ENCODE measurements at regions of chr20 and their contacts with region 1.

Region 1: DNA sequence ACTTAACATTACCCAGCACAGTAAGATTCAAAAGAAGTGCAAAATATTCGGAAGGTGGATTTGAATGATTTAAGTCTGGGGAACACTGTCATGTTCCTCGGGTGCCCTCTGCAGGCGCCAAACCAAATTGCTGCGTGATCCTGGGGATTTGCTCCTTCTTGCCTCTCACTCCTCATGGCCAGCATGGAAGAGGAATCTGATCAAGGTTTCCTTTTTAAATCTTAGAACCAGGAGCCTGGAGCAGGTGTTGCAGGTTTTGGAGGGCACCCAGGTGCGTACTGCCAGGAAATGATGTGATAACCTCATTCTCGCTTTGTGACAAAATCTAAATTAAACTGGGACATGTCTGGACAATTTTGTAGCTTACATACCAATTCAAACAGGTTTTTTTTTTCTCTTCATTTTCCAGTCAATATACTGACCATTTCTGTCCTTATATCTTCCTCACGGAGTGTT is 8.1 kb upstream of the PFDN4 start:
- DNase-seq: peak; percentile 59 to 81
- ATAC-seq: peak; percentile 52 to 82 (median 71)
- H3K4me3 ChIP-seq: no peak overlapping the region
- H3K4me3 Mint-ChIP-seq: no peak overlapping the region
- H3K27ac ChIP-seq: no peak overlapping the region
- H3K27ac Mint-ChIP-seq: no peak overlapping the region
- H3K4me1 ChIP-seq: no peaks in the 10 kb centered on the region
- H3K4me1 Mint-ChIP-seq: no peaks in the 10 kb centered on the region
- H3K27me3 ChIP-seq: no peaks in the 10 kb centered on the region
- H3K27me3 Mint-ChIP-seq: peaks cover 0 to 3% of the 10 kb centered on the region in 2 donors
- CTCF ChIP-seq: peak; percentile 87

Region 2: DNA sequence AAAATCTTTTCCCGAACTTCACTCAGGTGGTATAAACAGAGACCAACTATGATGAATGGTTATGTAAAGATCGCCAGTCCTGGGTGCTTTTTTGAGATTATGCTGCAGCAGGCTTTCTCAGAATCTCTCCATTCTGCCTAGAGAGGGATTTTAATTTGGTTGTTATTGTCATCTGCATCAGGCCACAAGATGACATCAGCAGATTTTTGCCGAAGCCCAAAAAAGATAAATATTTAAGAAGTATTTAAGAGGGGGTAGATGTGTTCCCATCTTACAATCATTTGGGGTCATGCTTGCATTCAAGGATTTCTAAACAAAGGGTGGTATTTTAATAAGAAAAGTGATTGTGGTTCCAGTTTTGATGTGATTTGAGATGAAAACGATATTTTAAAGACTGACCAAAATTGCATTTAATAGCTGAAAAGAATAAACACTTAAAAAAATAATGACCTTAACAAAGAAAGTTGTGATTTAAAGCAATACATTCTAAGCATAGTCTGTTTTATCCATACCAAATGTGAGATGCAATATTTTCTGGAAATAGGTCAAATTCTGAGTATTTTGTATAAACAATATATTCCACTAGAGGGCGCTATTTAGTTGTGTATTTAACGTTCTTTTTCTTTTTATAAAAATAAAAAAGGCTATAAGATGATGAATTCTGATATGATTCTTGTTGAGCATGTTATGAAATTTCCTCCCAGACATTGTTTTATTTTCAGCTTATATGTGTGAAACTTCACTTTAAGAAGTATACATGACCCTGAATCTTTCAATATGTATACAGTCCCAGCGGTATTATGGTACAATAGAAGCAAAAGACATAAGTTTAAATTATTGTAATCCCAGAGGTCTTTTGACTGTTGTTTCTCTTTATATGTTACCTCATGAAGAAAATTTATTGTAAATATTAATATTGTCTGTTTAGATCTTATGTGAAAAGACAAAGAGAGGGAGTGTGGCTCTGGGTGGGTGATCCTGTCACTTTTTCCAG is 1957.2 kb before region 1 on chr20:
- intact Hi-C with region 1: loop called (anchors 10 kb)
- DNase-seq: peak in 1 of 2 donors; percentile 44
- ATAC-seq: no peak
- H3K4me3 ChIP-seq: no peak overlapping the region
- H3K4me3 Mint-ChIP-seq: no peak overlapping the region
- H3K27ac ChIP-seq: no peak overlapping the region
- H3K27ac Mint-ChIP-seq: no peak overlapping the region
- H3K4me1 ChIP-seq: no peaks in the 10 kb centered on the region
- H3K4me1 Mint-ChIP-seq: no peaks in the 10 kb centered on the region
- H3K27me3 ChIP-seq: peaks cover 2% of the 10 kb centered on the region
- H3K27me3 Mint-ChIP-seq: peaks cover 5 to 7% of the 10 kb centered on the region in 2 donors
- CTCF ChIP-seq: peak; percentile 89

Region 3: GRCh38 chr20:53157443-53158408 is 1042.0 kb before region 1 on chr20:
- intact Hi-C with region 1: loop called (anchors 1 kb)
- DNase-seq: peak; percentile 27 to 61
- ATAC-seq: peak in 1 of 3 donors; percentile 44
- H3K4me3 ChIP-seq: no peak overlapping the region
- H3K4me3 Mint-ChIP-seq: no peak overlapping the region
- H3K27ac ChIP-seq: no peak overlapping the region
- H3K27ac Mint-ChIP-seq: no peak overlapping the region
- H3K4me1 ChIP-seq: no peaks in the 10 kb centered on the region
- H3K4me1 Mint-ChIP-seq: no peaks in the 10 kb centered on the region
- H3K27me3 ChIP-seq: no peaks in the 10 kb centered on the region
- H3K27me3 Mint-ChIP-seq: peaks cover 12 to 34% of the 10 kb centered on the region in 2 donors
- CTCF ChIP-seq: peak; percentile 57

Region 4: GRCh38 chr20:53413186-53413631 is 786.5 kb before region 1 on chr20:
- intact Hi-C with region 1: loop called (anchors 1 kb)
- DNase-seq: peak; percentile 23 to 67
- ATAC-seq: peak in 1 of 3 donors; percentile 58
- H3K4me3 ChIP-seq: no peak overlapping the region
- H3K4me3 Mint-ChIP-seq: no peak overlapping the region
- H3K27ac ChIP-seq: no peak overlapping the region
- H3K27ac Mint-ChIP-seq: no peak overlapping the region
- H3K4me1 ChIP-seq: peaks cover 6% of the 10 kb centered on the region
- H3K4me1 Mint-ChIP-seq: peaks cover 0 to 6% of the 10 kb centered on the region in 2 donors
- H3K27me3 ChIP-seq: no peaks in the 10 kb centered on the region
- H3K27me3 Mint-ChIP-seq: peaks cover 2 to 4% of the 10 kb centered on the region in 2 donors
- CTCF ChIP-seq: peak; percentile 42

Region 5: DNA sequence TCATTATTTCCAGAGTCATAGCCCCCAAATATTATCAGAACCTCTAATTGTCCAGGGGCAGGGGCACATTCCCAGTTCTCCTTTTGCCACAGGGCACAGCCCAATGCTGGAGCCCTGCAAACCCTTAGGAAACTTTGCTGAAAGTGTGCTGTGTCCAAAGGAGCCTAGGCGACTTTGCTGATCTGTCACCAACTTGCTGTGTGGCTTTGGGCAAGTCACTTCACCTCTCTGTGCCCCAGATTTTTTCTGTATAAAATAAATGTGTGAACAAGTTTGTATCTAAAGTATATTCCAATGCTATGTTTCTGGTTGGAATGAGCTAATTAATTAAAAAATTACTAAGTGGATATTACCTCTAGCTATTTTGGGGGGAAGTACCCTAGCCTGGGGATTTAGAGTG is 103.9 kb before region 1 on chr20:
- intact Hi-C with region 1: loop called (anchors 1 kb)
- DNase-seq: no peak
- ATAC-seq: no peak
- H3K4me3 ChIP-seq: no peak overlapping the region
- H3K4me3 Mint-ChIP-seq: no peak overlapping the region
- H3K27ac ChIP-seq: no peak overlapping the region
- H3K27ac Mint-ChIP-seq: no peak overlapping the region
- H3K4me1 ChIP-seq: no peaks in the 10 kb centered on the region
- H3K4me1 Mint-ChIP-seq: peaks cover 7 to 8% of the 10 kb centered on the region in 2 donors
- H3K27me3 ChIP-seq: no peaks in the 10 kb centered on the region
- H3K27me3 Mint-ChIP-seq: no peaks in the 10 kb centered on the region
- CTCF ChIP-seq: no peak

Measured in natural killer cell (primary cell).